Activated T-helper 1 cell treated with anti-CD3 and anti-CD28 coated beads, Interleukin-12 subunit alpha, Interleukin-12 subunit beta, Interleukin-2, Interleukin-4 antibody, amounts not matched to agents 30 ng/mL and 10 ng/mL and 1 ng/mL, durations not matched to agents 14 hours and 24 hours and 36 hours (primary cell): ENCODE measurements at regions of chr19 and their contacts with region 1.

Region 1: GRCh38 chr19:48445606-48446481 is at the start of gene GRWD1:
- DNase-seq: peak; percentile 92
- H3K4me3 Mint-ChIP-seq: peak within 1 kb of the TSS; percentile 92
- H3K27ac Mint-ChIP-seq: peak within 1 kb of the TSS; percentile 90
- H3K4me1 Mint-ChIP-seq: peaks cover 19% of the 10 kb centered on the region
- H3K27me3 Mint-ChIP-seq: peaks cover 25% of the 10 kb centered on the region
- total RNA-seq, gene GRWD1: 96.0 and 100 TPM in 2 replicates

Region 2: DNA sequence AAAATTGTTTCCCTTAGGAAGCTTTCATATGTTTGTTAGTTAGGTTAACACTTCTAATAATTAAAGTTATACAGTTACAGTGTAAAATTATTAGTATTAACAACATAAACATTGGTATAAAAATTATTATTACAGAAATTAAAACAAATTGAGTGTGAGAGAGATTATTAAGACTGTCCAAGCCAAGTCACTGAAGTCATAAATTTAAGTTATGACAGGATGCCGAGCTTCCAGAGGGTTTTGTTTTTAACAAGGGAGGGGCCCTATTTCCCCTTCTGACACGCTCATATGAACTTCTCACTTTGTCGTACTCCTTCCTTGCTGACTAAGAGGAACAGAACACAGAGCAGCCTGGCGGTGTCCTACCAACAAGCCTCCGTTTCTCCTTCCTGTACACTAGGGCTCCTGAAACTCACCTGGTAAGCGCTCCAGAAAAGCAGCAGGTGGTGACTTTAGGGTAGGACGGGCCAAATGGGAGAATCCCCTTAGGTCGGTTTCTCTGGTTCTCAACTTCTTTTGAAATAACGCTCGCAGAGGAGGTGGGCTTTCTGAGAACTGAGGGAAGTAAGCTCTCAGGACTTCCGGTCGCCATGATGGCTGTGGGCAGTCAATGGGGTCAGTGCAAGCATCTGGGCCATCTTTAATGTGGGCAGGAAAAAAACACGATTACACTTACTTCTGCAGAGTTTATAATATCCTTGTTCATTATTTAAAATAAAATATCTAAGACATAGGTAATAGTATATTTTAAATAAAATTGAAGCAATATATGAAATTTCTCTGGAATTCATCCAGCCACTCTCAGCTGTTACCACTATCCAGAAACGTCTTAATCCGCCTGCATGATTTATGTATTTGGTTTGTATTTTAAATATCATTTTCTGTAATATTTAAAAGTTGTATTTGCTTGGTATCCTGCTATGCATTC is 190.2 kb before region 1 on chr19 and contains the start of gene CARD8:
- intact Hi-C with region 1: loop called (anchors 5 kb)
- DNase-seq: peak; percentile 80
- H3K4me3 Mint-ChIP-seq: peak within 1 kb of the TSS; percentile 96
- H3K27ac Mint-ChIP-seq: peak within 1 kb of the TSS; percentile 98
- H3K4me1 Mint-ChIP-seq: peaks cover 79% of the 10 kb centered on the region
- H3K27me3 Mint-ChIP-seq: no peaks in the 10 kb centered on the region
- total RNA-seq, gene CARD8: 117 and 130 TPM in 2 replicates

Region 3: DNA sequence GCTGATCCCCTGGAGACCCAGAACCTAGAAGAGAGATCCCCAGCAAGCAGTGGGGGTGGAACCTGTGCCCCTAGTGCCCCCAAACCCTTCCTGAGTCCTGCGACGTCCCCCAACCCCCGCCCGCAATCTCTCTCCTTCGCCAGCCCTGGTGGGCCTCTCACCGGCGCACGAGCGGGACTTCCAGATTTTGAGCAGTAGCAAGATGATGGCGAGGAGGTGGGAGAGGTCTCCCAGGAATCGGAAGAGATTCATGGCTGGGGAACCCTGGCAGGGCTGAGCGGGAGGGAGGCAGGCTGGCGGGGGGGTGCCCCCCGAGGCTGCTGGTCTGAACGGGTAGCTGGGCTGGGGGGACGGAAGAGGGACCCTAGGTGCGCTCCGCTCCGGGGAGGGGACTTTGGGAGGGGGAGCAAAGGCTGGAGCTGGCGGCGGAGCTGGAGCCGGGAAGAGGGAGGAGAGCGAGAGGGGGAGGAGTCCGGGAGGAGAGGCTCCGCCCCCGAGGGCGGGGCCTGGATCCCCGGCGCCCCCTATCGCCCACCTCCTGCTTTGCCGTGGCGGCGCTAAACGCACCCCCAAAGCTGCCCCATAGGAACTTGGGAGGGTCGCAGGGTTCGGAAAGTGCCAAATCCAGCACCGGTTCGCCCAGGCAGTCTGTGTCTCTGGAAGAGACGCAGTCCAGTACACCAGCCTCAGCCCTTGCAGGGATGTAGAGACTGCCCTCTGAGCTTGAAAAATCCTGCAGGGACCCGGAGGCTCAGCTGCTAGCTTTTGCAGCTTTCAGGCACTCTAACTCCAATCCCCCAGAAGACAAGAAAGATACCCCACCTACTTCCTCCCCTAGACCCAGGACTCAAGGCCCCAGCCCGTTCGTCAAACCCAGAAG is 54.5 kb before region 1 on chr19 and contains the start of gene KDELR1:
- intact Hi-C with region 1: loop called (anchors 2 kb)
- DNase-seq: peak; percentile 69
- H3K4me3 Mint-ChIP-seq: peak within 1 kb of the TSS; percentile 98
- H3K27ac Mint-ChIP-seq: peak within 1 kb of the TSS; percentile 98
- H3K4me1 Mint-ChIP-seq: peaks cover 13% of the 10 kb centered on the region
- H3K27me3 Mint-ChIP-seq: peaks cover 36% of the 10 kb centered on the region
- total RNA-seq, gene KDELR1: 70.9 and 74.2 TPM in 2 replicates

Region 4: DNA sequence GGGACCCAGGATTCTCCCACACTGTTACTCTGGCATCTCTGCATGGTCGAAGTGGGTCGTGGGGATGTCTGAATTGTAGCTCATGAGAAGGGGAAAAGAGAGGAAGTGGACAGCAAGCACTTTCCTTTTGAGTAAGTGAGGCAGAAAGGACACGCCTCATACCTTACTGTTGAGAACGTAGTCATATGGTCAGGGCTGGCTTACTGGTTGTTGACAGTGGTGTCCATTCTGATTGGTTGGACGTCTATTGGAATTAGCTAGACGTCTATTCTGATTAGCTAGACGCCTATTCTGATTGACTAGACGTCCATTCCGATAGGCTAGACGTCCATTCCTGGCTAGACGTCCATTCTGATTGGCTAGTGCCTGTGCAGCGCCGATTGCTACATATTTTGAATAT is 40.0 kb before region 1 on chr19:
- intact Hi-C with region 1: no loop called
- DNase-seq: no peak
- H3K4me3 Mint-ChIP-seq: no peak overlapping the region
- H3K27ac Mint-ChIP-seq: no peak overlapping the region
- H3K4me1 Mint-ChIP-seq: no peaks in the 10 kb centered on the region
- H3K27me3 Mint-ChIP-seq: peaks cover 16% of the 10 kb centered on the region

Region 5: GRCh38 chr19:48419158-48419920 is 26.5 kb before region 1 on chr19:
- intact Hi-C with region 1: loop called (anchors 1 kb)
- DNase-seq: peak; percentile 66
- H3K4me3 Mint-ChIP-seq: peak overlapping the region; percentile 75
- H3K27ac Mint-ChIP-seq: peak overlapping the region; percentile 65
- H3K4me1 Mint-ChIP-seq: peaks cover 26% of the 10 kb centered on the region
- H3K27me3 Mint-ChIP-seq: peaks cover 18% of the 10 kb centered on the region

Region 6: GRCh38 chr19:48588670-48589399 is 143.0 kb after region 1 on chr19:
- intact Hi-C with region 1: loop called (anchors 1 kb)
- DNase-seq: peak; percentile 81
- H3K4me3 Mint-ChIP-seq: peak overlapping the region; percentile 63
- H3K27ac Mint-ChIP-seq: peak overlapping the region; percentile 60
- H3K4me1 Mint-ChIP-seq: peaks cover 16% of the 10 kb centered on the region
- H3K27me3 Mint-ChIP-seq: no peaks in the 10 kb centered on the region

Region 7: DNA sequence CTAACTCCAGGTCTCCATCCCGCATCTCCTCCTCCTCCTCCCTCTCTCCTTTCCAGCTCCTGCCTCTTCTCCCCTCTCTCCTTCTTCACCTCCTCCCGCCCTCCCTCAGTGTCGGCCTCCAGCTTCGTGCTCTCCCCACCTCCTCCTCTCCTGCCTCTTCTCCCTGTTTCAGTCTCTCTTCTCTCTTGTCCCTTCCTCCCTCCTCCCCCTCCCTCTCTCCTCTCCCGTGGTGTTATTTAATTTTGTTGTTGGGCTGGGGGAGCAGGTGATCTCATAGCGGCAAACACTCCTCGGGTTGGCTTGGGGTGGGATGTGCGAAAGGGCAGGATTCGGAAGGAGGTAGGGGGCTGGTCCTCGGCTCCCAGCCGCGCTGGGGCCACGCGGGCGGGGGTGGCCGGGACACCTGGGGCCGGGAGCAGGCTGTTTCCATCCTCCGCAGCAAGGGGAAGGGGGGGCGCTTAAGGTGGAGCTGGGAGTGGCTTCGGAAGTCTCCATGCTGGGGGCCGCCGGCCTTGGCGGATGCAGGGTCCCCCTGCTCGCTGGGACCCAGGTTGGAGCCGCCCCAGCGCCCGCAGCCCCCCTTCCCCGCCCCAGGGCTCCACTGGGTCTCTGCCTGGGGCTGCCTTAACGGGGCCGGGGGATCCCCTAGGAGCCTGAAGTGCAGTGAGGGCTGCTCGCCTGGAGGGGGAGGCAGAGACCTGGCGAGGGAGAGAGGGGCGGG is 200.3 kb after region 1 on chr19 and contains the start of gene CA11:
- intact Hi-C with region 1: no loop called
- DNase-seq: peak; percentile 88
- H3K4me3 Mint-ChIP-seq: peak within 1 kb of the TSS; percentile 87
- H3K27ac Mint-ChIP-seq: peak within 1 kb of the TSS; percentile 88
- H3K4me1 Mint-ChIP-seq: peaks cover 22% of the 10 kb centered on the region
- H3K27me3 Mint-ChIP-seq: peaks cover 6% of the 10 kb centered on the region
- total RNA-seq, gene CA11: 13.0 and 13.9 TPM in 2 replicates